ENCODE measurements at regions of chr19 and their contacts with region 1.

Region 1: DNA sequence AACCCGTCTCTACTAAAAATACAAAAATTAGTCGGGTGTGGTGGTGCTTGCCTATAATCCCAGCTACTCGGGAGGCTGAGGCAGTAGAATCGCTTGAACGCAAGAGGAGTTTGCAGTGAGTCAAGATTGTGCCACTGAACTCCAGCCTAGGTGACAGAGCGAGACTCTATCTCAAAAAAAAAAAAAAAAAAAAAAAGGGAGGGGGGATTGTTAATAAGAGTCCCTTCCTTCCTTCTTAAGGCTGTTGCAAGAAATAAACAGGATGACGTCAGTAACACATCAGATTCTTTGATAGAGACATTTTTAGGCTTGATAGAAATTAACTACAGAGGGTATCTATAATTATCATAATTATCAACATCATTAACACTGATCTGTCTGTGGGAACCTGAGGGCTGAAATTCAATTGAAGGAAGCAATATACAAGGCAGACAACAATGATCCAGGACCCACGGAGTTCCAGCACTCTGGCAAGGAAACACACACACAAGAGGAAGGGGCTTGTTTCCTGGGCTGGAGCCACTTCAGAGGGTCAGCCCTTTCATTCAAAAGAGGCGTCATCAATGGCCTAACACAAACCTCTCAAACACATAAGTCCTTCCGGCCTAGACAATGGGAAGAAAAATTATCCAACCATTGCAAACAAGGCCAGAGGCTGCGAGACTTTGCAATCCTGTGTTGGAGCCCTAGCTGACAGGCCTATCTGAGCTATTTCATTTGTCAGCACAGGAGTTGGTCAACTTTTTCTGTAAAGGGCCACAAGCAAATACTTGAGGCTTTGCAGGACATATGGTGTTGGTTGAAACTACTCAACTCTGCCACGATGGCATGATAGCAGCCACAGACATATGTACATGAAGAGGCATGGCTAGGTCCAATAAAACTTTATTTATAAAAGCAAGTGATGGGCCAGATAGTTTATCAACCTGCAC is 105.2 kb downstream of the INSR start:
- DNase-seq: no peak
- H3K4me3 ChIP-seq: no peak overlapping the region
- H3K27ac ChIP-seq: peak overlapping the region in 1 of 2 donors; percentile 10
- H3K4me1 ChIP-seq: peaks cover 13% of the 10 kb centered on the region
- H3K27me3 ChIP-seq: no peaks in the 10 kb centered on the region
- CTCF ChIP-seq: no peak
- EP300 ChIP-seq: no peak
- POLR2A ChIP-seq: no peak

Region 2: GRCh38 chr19:6979399-6979798 is 209.6 kb before region 1 on chr19:
- intact Hi-C with region 1: no loop called
- DNase-seq: no peak
- H3K4me3 ChIP-seq: no peak overlapping the region
- H3K27ac ChIP-seq: no peak overlapping the region
- H3K4me1 ChIP-seq: no peaks in the 10 kb centered on the region
- H3K27me3 ChIP-seq: no peaks in the 10 kb centered on the region
- CTCF ChIP-seq: no peak
- EP300 ChIP-seq: no peak
- POLR2A ChIP-seq: no peak

Region 3: GRCh38 chr19:7211204-7211951 is 22.4 kb after region 1 on chr19:
- intact Hi-C with region 1: loop called in 1 of 4 experiments (anchors 2 kb)
- DNase-seq: peak; percentile 85 to 90 (median 86)
- H3K4me3 ChIP-seq: no peak overlapping the region
- H3K27ac ChIP-seq: peak overlapping the region; percentile 65 to 84
- H3K4me1 ChIP-seq: peaks cover 41% of the 10 kb centered on the region
- H3K27me3 ChIP-seq: no peaks in the 10 kb centered on the region
- CTCF ChIP-seq: no peak
- EP300 ChIP-seq: no peak
- POLR2A ChIP-seq: no peak

Region 4: DNA sequence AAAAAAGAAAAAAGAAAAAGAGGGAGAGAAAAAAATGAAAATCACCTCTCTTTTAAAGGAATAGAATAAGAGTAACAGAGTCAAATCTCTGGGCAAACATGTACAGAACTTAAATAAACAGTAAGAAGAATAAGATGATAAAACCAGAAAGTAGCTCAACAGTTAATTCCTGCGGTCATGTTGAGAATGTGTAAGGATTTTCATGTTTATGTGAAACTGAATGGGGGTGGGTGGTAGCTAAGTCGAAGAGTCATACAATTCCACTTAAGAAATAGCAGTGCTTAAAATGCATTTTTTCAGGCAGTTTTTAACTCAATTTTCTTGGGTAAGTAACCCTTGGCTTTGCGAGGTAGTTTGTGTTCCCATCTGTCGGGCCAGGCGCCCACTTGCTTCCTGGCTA is 239.0 kb after region 1 on chr19:
- intact Hi-C with region 1: no loop called
- DNase-seq: no peak
- H3K4me3 ChIP-seq: no peak overlapping the region
- H3K27ac ChIP-seq: no peak overlapping the region
- H3K4me1 ChIP-seq: no peaks in the 10 kb centered on the region
- H3K27me3 ChIP-seq: no peaks in the 10 kb centered on the region
- CTCF ChIP-seq: no peak
- EP300 ChIP-seq: no peak
- POLR2A ChIP-seq: no peak

Measured in ovary (tissue), 10 donors.